Dorsolateral prefrontal cortex (tissue), 120 donors: ENCODE measurements at regions of chr9 and their contacts with region 1.

Region 1: GRCh38 chr9:123322273-123323195 is 33.5 kb upstream of the CRB2 start:
- DNase-seq: no peak
- H3K4me3 ChIP-seq: no peak overlapping the region
- H3K27ac ChIP-seq: peak overlapping the region in 1 of 59 donors; percentile 36
- H3K27me3 ChIP-seq: no peaks in the 10 kb centered on the region
- CTCF ChIP-seq: no peak

Region 2: GRCh38 chr9:123287639-123288038 is 34.9 kb before region 1 on chr9:
- intact Hi-C with region 1: loop called in 1 of 2 experiments (anchors 5 kb)
- DNase-seq: no peak
- H3K4me3 ChIP-seq: no peak overlapping the region
- H3K27ac ChIP-seq: no peak overlapping the region
- H3K27me3 ChIP-seq: peaks cover 0 to 9% (median 0%) of the 10 kb centered on the region in 45 donors
- CTCF ChIP-seq: no peak

Region 3: DNA sequence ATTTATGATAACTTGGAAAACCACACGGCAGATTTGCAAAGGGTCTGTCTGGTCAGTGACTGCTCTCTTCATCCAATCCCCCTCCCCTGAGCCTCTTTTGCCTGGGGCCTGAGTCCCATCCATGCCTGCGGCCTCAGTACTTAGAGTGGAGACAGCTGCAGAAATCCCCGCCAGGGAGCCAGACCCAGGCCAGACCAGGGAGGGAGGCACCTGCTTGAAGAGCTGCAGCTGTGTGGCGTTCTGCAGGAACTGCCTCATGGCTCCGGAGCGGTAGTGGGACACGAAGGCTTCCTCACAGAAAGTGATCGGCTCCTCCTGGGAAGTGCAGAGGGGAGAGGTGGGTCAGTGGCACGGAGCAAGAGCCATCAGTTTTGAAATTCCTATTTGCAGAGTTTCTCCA is 135.0 kb after region 1 on chr9:
- intact Hi-C with region 1: no loop called
- DNase-seq: peak in 1 of 10 donors; percentile 32
- H3K4me3 ChIP-seq: no peak overlapping the region
- H3K27ac ChIP-seq: no peak overlapping the region
- H3K27me3 ChIP-seq: no peaks in the 10 kb centered on the region
- CTCF ChIP-seq: no peak